ENCODE measurements at regions of chr10 and their contacts with region 1.

Region 1: GRCh38 chr10:93074147-93074596 is 479 bp downstream of the CYP26A1 start:
- DNase-seq: no peak
- CTCF ChIP-seq: peak; percentile 16

Region 2: GRCh38 chr10:92757066-92757710 is 317.0 kb before region 1 on chr10:
- in situ Hi-C with region 1: no loop called
- DNase-seq: peak; percentile 64
- CTCF ChIP-seq: peak; percentile 31

Region 3: GRCh38 chr10:93352638-93353383 is 278.6 kb after region 1 on chr10:
- in situ Hi-C with region 1: loop called (anchors 10 kb)
- DNase-seq: peak; percentile 58
- CTCF ChIP-seq: peak; percentile 43